ENCODE measurements at regions of chr1 and their contacts with region 1.

Region 1: GRCh38 chr1:58816072-58816746 is 32.4 kb upstream of the JUN start:
- DNase-seq: peak; percentile 91
- H3K4me3 ChIP-seq: peak overlapping the region; percentile 34 to 68 (median 54)
- H3K27ac ChIP-seq: peak overlapping the region; percentile 100
- H3K4me1 ChIP-seq: peaks cover 72% of the 10 kb centered on the region
- H3K27me3 ChIP-seq: no peaks in the 10 kb centered on the region
- CTCF ChIP-seq: peak in 1 of 2 donors; percentile 14
- POLR2A ChIP-seq: peak; percentile 63

Region 2: DNA sequence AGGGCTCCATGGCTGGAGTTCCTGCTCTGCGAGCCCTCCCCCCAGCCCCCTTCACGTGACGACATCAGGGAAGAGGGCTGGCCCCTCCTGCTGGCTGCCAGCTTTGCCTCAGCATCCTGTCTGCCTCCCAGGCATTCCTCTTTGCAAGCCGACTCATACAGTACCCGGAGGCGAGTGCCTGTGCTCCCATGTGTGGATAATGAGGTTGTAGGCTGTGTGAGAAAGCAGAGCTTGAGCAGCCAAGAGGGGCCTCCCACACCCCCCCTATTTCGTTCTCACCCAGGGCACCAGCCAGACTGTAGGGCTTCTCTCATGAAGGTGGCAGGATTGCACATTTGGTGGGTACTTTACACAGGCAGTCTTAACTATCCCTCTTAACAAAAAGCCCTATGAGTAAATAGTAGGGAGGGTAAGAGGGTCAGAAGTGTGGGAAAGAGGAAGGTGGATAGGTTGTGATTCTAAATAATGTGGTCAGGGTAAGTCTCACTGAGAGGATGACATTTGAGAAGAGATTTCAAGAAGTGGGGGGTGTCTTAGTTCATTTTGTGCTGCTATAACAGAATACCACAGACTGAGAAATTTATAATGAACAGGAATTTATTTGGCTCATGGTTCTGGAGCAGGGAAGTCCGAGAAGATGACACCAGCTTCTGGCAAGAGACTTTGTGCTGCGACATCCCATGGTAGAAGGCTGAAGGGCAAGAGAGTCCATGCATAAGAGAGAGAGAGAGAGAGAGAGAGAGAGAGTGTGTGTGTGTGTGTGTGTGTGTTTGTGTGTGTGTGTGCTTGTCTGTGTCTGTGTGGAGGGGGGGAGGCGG is 383.1 kb before region 1 on chr1:
- CTCF ChIA-PET with region 1: no interaction called
- POLR2A ChIA-PET with region 1: no interaction called
- dilution Hi-C with region 1: no loop called
- intact Hi-C with region 1: no loop called
- DNase-seq: peak; percentile 22
- H3K4me3 ChIP-seq: no peak overlapping the region
- H3K27ac ChIP-seq: no peak overlapping the region
- H3K4me1 ChIP-seq: peaks cover 17% of the 10 kb centered on the region
- H3K27me3 ChIP-seq: no peaks in the 10 kb centered on the region
- CTCF ChIP-seq: no peak
- POLR2A ChIP-seq: no peak

Region 3: GRCh38 chr1:58739856-58740466 is 76.2 kb before region 1 on chr1:
- CTCF ChIA-PET with region 1: no interaction called
- POLR2A ChIA-PET with region 1: no interaction called
- dilution Hi-C with region 1: no loop called
- intact Hi-C with region 1: no loop called
- DNase-seq: peak; percentile 73
- H3K4me3 ChIP-seq: no peak overlapping the region
- H3K27ac ChIP-seq: no peak overlapping the region
- H3K4me1 ChIP-seq: peaks cover 3% of the 10 kb centered on the region
- H3K27me3 ChIP-seq: no peaks in the 10 kb centered on the region
- CTCF ChIP-seq: peak; percentile 31 to 38
- POLR2A ChIP-seq: no peak

Region 4: DNA sequence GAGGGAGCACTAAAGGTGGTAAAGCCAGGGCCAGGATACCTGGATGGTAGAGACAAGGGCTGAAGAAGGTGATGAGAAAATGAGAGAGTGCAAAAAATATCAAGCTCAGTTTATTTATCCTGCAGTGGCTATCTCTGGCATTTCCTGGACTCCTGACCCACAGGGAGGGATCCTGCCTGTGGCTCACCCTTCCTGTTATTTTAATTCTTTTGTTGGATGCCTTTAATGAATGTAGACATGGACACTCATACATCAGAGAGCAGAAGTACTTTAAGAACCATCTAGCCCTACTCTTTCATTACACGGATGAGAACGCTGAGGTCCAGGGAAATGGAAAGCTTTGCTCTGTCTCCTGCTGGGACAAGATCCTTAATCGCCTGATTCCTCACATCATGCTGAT is 53.0 kb before region 1 on chr1:
- CTCF ChIA-PET with region 1: no interaction called
- POLR2A ChIA-PET with region 1: no interaction called
- dilution Hi-C with region 1: no loop called
- intact Hi-C with region 1: no loop called
- DNase-seq: peak; percentile 83
- H3K4me3 ChIP-seq: no peak overlapping the region
- H3K27ac ChIP-seq: peak overlapping the region; percentile 76
- H3K4me1 ChIP-seq: peaks cover 41% of the 10 kb centered on the region
- H3K27me3 ChIP-seq: no peaks in the 10 kb centered on the region
- CTCF ChIP-seq: no peak
- POLR2A ChIP-seq: no peak

Region 5: DNA sequence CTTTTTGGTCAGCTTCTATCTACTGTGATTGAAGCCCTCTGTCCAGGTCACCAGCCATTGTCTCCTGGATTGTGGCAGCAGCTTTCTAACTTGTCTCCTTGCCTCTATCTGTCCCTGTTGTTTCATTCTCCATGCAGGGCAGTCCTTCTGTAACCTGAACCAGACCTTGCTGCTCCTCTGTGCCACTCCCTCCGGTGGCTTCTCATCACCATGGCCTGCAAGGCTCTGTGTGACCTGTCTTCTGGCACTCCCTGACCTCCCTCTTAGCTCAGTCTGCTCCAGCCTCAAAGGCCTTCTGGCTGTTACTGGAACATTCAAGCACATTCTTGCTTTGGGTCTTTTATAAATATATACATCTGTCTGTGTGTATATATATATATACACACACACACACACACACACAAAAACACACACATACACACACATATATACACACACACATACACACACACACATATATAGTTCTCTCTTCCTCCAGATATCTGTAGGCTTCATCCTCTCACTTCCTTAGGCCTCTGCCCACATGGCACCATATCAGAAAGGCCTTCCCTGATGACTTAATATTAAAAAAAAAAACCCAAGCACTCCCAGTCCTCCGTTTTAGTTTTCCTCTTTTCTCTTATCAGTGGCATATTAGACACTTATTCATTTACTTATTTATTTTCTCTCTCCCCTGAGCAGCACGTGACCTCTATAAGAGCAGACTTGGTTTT is 11.2 kb before region 1 on chr1:
- CTCF ChIA-PET with region 1: interaction called, 3 read pairs
- POLR2A ChIA-PET with region 1: interaction called, 11 read pairs
- dilution Hi-C with region 1: no loop called
- intact Hi-C with region 1: no loop called
- DNase-seq: no peak
- H3K4me3 ChIP-seq: no peak overlapping the region
- H3K27ac ChIP-seq: no peak overlapping the region
- H3K4me1 ChIP-seq: no peaks in the 10 kb centered on the region
- H3K27me3 ChIP-seq: no peaks in the 10 kb centered on the region
- CTCF ChIP-seq: no peak
- POLR2A ChIP-seq: no peak

Region 6: GRCh38 chr1:58896246-58897183 is 80.3 kb after region 1 on chr1:
- CTCF ChIA-PET with region 1: interaction called, 4 read pairs
- POLR2A ChIA-PET with region 1: interaction called, 3 read pairs
- dilution Hi-C with region 1: no loop called
- intact Hi-C with region 1: loop called (anchors 1 kb)
- DNase-seq: peak; percentile 79
- H3K4me3 ChIP-seq: no peak overlapping the region
- H3K27ac ChIP-seq: peak overlapping the region; percentile 61
- H3K4me1 ChIP-seq: peaks cover 75% of the 10 kb centered on the region
- H3K27me3 ChIP-seq: no peaks in the 10 kb centered on the region
- CTCF ChIP-seq: peak in 1 of 2 donors; percentile 17
- POLR2A ChIP-seq: no peak

Region 7: GRCh38 chr1:59076612-59077011 is 260.4 kb after region 1 on chr1:
- CTCF ChIA-PET with region 1: interaction called, 3 read pairs
- POLR2A ChIA-PET with region 1: no interaction called
- dilution Hi-C with region 1: no loop called
- intact Hi-C with region 1: loop called (anchors 2 kb)
- DNase-seq: peak; percentile 60
- H3K4me3 ChIP-seq: no peak overlapping the region
- H3K27ac ChIP-seq: no peak overlapping the region
- H3K4me1 ChIP-seq: peaks cover 13% of the 10 kb centered on the region
- H3K27me3 ChIP-seq: no peaks in the 10 kb centered on the region
- CTCF ChIP-seq: peak in 1 of 2 donors; percentile 16
- POLR2A ChIP-seq: no peak

Region 8: GRCh38 chr1:59143133-59143487 is 326.9 kb after region 1 on chr1:
- CTCF ChIA-PET with region 1: no interaction called
- POLR2A ChIA-PET with region 1: no interaction called
- dilution Hi-C with region 1: no loop called
- intact Hi-C with region 1: loop called (anchors 5 kb)
- DNase-seq: peak; percentile 91
- H3K4me3 ChIP-seq: no peak overlapping the region
- H3K27ac ChIP-seq: peak overlapping the region; percentile 82
- H3K4me1 ChIP-seq: peaks cover 43% of the 10 kb centered on the region
- H3K27me3 ChIP-seq: no peaks in the 10 kb centered on the region
- CTCF ChIP-seq: no peak
- POLR2A ChIP-seq: peak; percentile 45

Region 9: GRCh38 chr1:59743324-59744091 is 927.3 kb after region 1 on chr1:
- CTCF ChIA-PET with region 1: no interaction called
- POLR2A ChIA-PET with region 1: no interaction called
- dilution Hi-C with region 1: no loop called
- intact Hi-C with region 1: loop called (anchors 1 kb)
- DNase-seq: peak; percentile 91
- H3K4me3 ChIP-seq: no peak overlapping the region
- H3K27ac ChIP-seq: peak overlapping the region; percentile 50
- H3K4me1 ChIP-seq: peaks cover 30% of the 10 kb centered on the region
- H3K27me3 ChIP-seq: no peaks in the 10 kb centered on the region
- CTCF ChIP-seq: no peak
- POLR2A ChIP-seq: no peak

Measured in endothelial cell of umbilical vein (primary cell).